ENCODE measurements at regions of chr12 and their contacts with region 1.

Region 1: DNA sequence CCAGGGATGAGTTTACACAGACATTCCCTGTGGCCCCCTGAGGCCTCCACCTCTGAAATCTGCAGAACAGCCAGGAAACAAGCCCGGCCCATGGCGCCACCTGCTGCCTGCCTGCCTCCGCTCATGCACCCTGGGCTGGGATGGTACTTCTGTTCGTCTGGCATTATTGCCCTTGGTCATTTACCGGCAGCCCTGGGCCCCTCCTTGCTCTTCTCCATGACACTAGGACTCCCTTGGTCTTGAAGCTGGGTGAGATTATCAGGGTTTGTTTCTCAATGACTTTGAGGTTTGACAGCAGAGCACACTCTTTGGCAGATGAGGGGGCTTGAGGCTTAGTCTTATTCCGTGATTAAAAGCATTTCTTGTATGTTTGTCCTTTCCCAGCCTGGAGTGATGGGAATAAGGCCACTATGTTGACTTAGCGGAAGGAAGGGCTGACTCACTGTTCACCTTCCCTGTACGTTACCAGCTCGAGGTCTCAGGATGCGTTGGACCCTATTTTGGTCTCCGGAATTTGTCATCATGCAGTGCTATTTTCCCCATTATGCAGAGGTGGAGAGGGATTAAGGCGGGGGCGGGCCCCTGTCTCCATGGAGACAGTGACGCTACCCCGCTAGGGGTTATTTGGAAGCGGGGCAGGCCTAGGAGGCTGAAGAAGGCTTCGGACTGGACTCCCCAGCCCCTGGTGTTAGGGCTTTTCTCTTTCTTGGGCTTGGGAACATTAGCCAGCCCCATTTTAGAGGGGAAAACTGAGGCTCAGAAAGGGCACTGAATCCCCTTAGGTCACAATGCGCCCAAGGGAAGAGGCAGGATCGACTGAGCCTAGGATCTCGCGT is 706 bp upstream of the PEX5 start:
- DNase-seq: peak; percentile 52
- CTCF ChIP-seq: peak; percentile 75

Region 2: DNA sequence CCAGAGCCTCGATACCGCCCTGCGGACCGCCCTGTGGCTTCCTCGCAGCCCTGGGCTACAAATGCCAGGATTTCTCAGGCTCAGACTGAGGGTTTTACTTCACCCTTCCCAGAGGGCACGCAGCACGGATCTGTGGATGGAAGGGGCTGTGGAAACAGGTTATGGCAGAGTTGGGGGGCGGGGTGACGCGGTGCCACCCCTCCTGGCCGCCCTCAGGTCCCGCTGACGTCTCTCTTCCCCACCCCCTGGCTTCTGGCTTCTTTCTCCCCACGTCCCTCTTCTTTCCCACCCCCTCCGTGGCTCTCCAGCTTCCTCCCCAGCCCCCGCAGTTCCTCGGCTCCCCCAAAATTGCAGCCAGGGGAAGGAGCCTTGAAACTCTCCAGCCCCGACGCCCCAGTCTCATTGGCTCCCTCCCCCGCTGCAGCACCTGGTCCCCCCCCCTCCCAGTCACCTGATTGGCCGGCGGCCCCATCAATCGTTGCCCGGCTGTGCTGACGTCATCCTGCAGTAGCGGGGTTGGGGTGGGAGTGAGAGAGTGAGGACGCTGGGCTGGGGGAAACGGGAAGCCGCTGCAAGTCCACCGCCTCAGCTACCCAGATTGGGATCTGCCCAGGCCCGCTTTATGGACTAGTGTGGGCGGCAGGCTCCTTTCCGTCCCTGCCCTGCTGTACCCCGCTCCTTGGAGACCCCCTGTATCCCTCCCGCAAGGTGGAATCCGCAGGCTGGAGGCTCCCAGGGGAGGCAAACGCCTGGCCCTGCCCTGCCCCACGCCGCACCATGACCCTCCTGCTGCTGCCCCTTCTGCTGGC is 58.7 kb before region 1 on chr12 and contains the start of gene CLSTN3:
- CTCF ChIA-PET with region 1: no interaction called
- POLR2A ChIA-PET with region 1: no interaction called
- DNase-seq: peak; percentile 100
- CTCF ChIP-seq: no peak

Region 3: GRCh38 chr12:7175493-7175892 is 13.3 kb before region 1 on chr12:
- CTCF ChIA-PET with region 1: interaction called, 12 read pairs
- POLR2A ChIA-PET with region 1: no interaction called
- DNase-seq: no peak
- CTCF ChIP-seq: no peak

Measured in GM10248 (cell line).